ENCODE measurements at regions of chr1 and their contacts with region 1.

Region 1: GRCh38 chr1:231534703-231535159 is 6.3 kb downstream of the TSNAX start:
- DNase-seq: no peak
- H3K4me3 ChIP-seq: no peak overlapping the region
- H3K27ac ChIP-seq: no peak overlapping the region
- H3K4me1 ChIP-seq: no peaks in the 10 kb centered on the region
- H3K27me3 ChIP-seq: no peaks in the 10 kb centered on the region
- CTCF ChIP-seq: no peak
- POLR2A ChIP-seq: no peak

Region 2: DNA sequence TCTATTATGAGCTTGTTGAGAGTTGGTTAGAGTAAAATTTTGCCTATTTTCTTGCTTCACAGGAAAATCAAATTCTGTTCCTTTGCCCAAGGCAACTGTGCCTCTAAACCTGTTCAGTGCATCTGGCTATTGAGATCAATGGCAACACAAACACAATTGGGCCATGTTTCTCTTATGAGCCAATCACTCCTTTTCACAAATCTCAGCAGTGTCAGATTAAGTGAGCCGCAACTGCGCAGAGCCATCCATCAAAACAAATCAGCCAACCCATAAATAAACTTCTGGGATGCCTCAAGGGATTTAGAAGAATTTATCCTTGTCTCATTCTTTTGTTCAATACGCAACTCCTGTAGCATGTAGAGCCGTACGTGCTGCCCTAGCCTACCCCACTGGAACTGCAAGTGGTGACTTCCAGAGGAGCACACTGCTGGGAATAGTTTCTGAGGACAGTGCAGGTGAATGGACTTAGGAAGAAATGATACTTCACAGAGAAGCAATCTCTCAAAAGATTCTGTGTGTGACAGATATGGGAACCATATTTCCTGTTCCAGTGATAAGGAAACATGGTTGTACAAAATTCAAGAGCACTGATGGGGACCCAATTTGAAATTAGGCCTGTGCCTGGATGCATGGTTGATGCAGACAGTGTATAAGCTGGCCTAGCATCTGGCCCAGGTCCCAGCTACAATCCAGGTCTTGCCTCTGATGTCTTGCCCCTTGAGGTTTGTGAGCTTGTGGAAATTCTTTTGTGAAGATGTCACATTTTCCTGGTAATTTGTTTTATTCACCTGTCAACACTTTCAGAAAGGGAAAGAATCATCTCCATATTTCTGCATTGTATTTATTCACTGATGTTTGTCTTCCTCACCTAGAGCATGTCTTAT is 1742.5 kb before region 1 on chr1:
- intact Hi-C with region 1: no loop called
- DNase-seq: no peak
- H3K4me3 ChIP-seq: no peak overlapping the region
- H3K27ac ChIP-seq: no peak overlapping the region
- H3K4me1 ChIP-seq: no peaks in the 10 kb centered on the region
- H3K27me3 ChIP-seq: no peaks in the 10 kb centered on the region
- CTCF ChIP-seq: no peak
- POLR2A ChIP-seq: no peak

Region 3: GRCh38 chr1:231691618-231692259 is 157.0 kb after region 1 on chr1:
- intact Hi-C with region 1: loop called (anchors 10 kb)
- DNase-seq: no peak
- H3K4me3 ChIP-seq: no peak overlapping the region
- H3K27ac ChIP-seq: no peak overlapping the region
- H3K4me1 ChIP-seq: no peaks in the 10 kb centered on the region
- H3K27me3 ChIP-seq: no peaks in the 10 kb centered on the region
- CTCF ChIP-seq: peak in 2 of 3 donors; percentile 34 to 36
- POLR2A ChIP-seq: no peak